Dendritic cell treated with granulocyte-macrophage colony-stimulating factor and Interleukin-4, amounts not matched to agents 40 ng/mL and 50 ng/mL, for 4 days (primary cell): ENCODE measurements at regions of chr1 and their contacts with region 1.

Region 1: GRCh38 chr1:171245458-171246064 is 2.7 kb upstream of the FMO1 start:
- H3K4me3 Mint-ChIP-seq: no peak overlapping the region
- H3K27ac Mint-ChIP-seq: no peak overlapping the region
- H3K4me1 Mint-ChIP-seq: no peaks in the 10 kb centered on the region
- H3K27me3 Mint-ChIP-seq: peaks cover 15% of the 10 kb centered on the region

Region 2: GRCh38 chr1:171313835-171314320 is 68.3 kb after region 1 on chr1 and contains the start of gene FMO4:
- intact Hi-C with region 1: loop called (anchors 2 kb)
- H3K4me3 Mint-ChIP-seq: peak within 1 kb of the TSS; percentile 67
- H3K27ac Mint-ChIP-seq: peak within 1 kb of the TSS; percentile 82
- H3K4me1 Mint-ChIP-seq: peaks cover 9% of the 10 kb centered on the region
- H3K27me3 Mint-ChIP-seq: no peaks in the 10 kb centered on the region

Region 3: GRCh38 chr1:171403371-171403770 is 157.8 kb after region 1 on chr1:
- intact Hi-C with region 1: loop called (anchors 10 kb)
- H3K4me3 Mint-ChIP-seq: no peak overlapping the region
- H3K27ac Mint-ChIP-seq: no peak overlapping the region
- H3K4me1 Mint-ChIP-seq: peaks cover 5% of the 10 kb centered on the region
- H3K27me3 Mint-ChIP-seq: peaks cover 2% of the 10 kb centered on the region